A673 (cell line): ENCODE measurements at regions of chr4 and their contacts with region 1.

Region 1: DNA sequence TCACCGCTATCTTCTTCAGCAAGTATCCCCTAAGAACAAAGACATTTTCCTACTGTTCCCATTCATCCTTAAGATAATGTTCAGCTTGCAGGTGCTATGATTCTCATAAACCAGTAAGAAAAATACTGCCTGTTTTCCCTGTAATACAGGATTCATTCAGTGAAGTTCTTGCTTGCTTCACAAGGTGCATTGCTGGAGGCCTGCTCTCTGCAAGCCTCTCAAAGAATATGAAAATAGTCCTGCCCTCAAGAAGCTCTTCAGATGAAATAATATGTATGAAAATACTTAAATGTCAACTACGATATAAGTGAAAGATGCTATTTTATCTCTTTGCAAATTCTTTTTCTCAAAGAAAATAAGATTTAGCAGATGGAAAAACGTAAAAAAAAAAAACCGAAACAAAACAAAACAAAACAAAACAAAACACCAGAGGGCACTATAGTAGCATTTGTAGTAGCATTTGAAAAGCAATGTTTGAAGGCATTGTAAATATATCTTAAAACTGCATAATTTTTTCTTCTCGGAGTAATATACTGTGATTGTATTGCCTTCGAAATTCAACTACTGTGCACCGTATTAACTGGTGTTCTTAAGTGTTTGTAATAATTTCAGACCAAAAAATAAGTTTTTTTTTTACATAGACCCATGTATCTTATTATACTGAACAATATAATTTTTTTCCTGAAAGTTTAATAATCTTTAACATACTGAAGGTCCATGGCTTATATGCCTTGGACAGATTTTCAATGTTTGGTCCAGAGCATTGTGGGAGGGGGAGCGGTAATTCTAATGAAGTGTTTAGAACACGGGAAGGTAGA is 26.0 kb downstream of the ADH4 start:
- DNase-seq: peak; percentile 39
- H3K4me3 ChIP-seq: no peak overlapping the region
- H3K27ac ChIP-seq: no peak overlapping the region
- H3K4me1 ChIP-seq: no peaks in the 10 kb centered on the region
- H3K27me3 ChIP-seq: no peaks in the 10 kb centered on the region
- CTCF ChIP-seq: peak; percentile 65

Region 2: DNA sequence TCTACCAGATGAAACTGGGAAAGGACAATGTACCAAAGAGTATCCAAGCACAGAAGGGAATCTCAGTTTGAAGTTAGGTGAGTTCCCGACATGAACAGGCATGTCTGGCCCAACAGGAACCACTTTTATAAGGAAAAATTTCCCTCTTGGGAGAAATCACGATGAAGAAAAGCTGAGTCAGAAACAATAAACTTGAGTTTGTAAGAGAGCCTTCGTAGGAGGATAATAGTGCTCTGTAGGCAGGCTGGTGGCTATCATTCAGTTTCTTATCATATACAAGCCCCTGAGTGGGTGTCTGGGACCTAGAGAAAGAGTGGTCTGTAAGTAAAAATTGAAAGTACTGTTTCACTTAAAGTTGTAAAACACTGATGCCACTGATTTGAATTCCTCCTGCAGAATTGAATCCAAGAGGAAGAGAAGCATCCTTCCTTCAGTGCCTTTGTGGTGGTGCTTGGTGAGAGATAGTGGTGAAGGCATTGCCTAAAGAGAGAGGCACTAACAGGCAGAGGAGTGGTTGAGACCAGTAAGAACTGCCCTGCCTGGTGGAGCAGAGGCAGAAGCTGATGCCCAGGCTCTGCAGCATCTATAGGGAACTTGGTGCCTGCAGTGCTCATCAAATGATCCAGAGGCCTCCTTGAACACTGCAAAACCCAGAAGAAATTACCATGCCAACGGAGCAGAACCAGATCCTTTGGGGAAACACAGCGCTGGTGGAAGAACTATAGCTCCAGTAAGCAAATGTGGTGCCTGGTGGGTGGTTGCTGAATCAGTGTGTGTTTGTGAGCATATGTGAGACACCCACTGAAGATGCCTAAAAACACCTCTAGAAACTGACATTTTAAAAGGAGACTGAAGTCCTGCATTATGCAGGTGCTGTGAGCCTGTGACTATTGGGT is 154.3 kb before region 1 on chr4:
- CTCF ChIA-PET with region 1: no interaction called
- POLR2A ChIA-PET with region 1: no interaction called
- intact Hi-C with region 1: no loop called
- DNase-seq: no peak
- H3K4me3 ChIP-seq: no peak overlapping the region
- H3K27ac ChIP-seq: no peak overlapping the region
- H3K4me1 ChIP-seq: peaks cover 11% of the 10 kb centered on the region
- H3K27me3 ChIP-seq: no peaks in the 10 kb centered on the region
- CTCF ChIP-seq: no peak

Region 3: GRCh38 chr4:99462875-99463464 is 344.9 kb after region 1 on chr4:
- CTCF ChIA-PET with region 1: no interaction called
- POLR2A ChIA-PET with region 1: no interaction called
- intact Hi-C with region 1: loop called (anchors 1 kb)
- DNase-seq: peak; percentile 79
- H3K4me3 ChIP-seq: no peak overlapping the region
- H3K27ac ChIP-seq: no peak overlapping the region
- H3K4me1 ChIP-seq: no peaks in the 10 kb centered on the region
- H3K27me3 ChIP-seq: peaks cover 19% of the 10 kb centered on the region
- CTCF ChIP-seq: peak; percentile 87

Region 4: GRCh38 chr4:99529228-99529627 is 411.1 kb after region 1 on chr4:
- CTCF ChIA-PET with region 1: no interaction called
- POLR2A ChIA-PET with region 1: no interaction called
- intact Hi-C with region 1: no loop called
- DNase-seq: no peak
- H3K4me3 ChIP-seq: no peak overlapping the region
- H3K27ac ChIP-seq: no peak overlapping the region
- H3K4me1 ChIP-seq: no peaks in the 10 kb centered on the region
- H3K27me3 ChIP-seq: no peaks in the 10 kb centered on the region
- CTCF ChIP-seq: no peak